Left colon (tissue), 2 donors: ENCODE measurements at regions of chr22 and their contacts with region 1.

Region 1: GRCh38 chr22:35627264-35628041 is 10.3 kb upstream of the MB start:
- DNase-seq: peak; percentile 89 to 92
- ATAC-seq: peak; percentile 83

Region 2: GRCh38 chr22:35525687-35526332 is 101.6 kb before region 1 on chr22:
- intact Hi-C with region 1: no loop called
- DNase-seq: no peak
- ATAC-seq: peak; percentile 34

Region 3: GRCh38 chr22:35552196-35552842 is 75.1 kb before region 1 on chr22:
- intact Hi-C with region 1: no loop called
- DNase-seq: peak in 1 of 2 donors; percentile 45
- ATAC-seq: peak; percentile 75

Region 4: GRCh38 chr22:35914665-35915476 is 287.4 kb after region 1 on chr22:
- intact Hi-C with region 1: loop called (anchors 5 kb)
- DNase-seq: peak; percentile 35 to 73
- ATAC-seq: peak; percentile 96

Region 5: GRCh38 chr22:35921777-35922176 is 294.3 kb after region 1 on chr22:
- intact Hi-C with region 1: loop called (anchors 5 kb)
- DNase-seq: peak; percentile 53 to 66
- ATAC-seq: peak; percentile 90

Region 6: GRCh38 chr22:36123673-36124630 is 496.5 kb after region 1 on chr22:
- intact Hi-C with region 1: loop called in 1 of 2 experiments (anchors 5 kb)
- DNase-seq: peak; percentile 96 to 98
- ATAC-seq: peak; percentile 98